K562 (cell line): ENCODE measurements at regions of chr2 and their contacts with region 1.

Region 1: GRCh38 chr2:65722028-65722778 is 289.8 kb upstream of the SPRED2 start:
- DNase-seq: peak in 2 of 4 experiments; percentile 36 to 62
- ATAC-seq: peak; percentile 95
- H3K4me3 ChIP-seq: no peak overlapping the region
- H3K27ac ChIP-seq: no peak overlapping the region
- H3K4me1 ChIP-seq: no peaks in the 10 kb centered on the region
- H3K27me3 ChIP-seq: peaks cover 0 to 2% of the 10 kb centered on the region in 2 experiments; a peak in 3 of 5 replicates
- CTCF ChIP-seq: peak; percentile 52 to 75 (median 64)
- EP300 ChIP-seq: no peak
- POLR2A ChIP-seq: no peak
- RAD21 ChIP-seq: peak; percentile 85 to 93

Region 2: GRCh38 chr2:64904413-64905329 is 817.5 kb before region 1 on chr2:
- CTCF ChIA-PET with region 1: no interaction called
- POLR2A ChIA-PET with region 1: no interaction called
- in situ Hi-C with region 1: no loop called
- intact Hi-C with region 1: no loop called
- DNase-seq: no peak
- ATAC-seq: no peak
- H3K4me3 ChIP-seq: no peak overlapping the region
- H3K27ac ChIP-seq: no peak overlapping the region
- H3K4me1 ChIP-seq: no peaks in the 10 kb centered on the region
- H3K27me3 ChIP-seq: peaks cover 18 to 31% of the 10 kb centered on the region in 2 experiments; a peak in 4 of 5 replicates
- CTCF ChIP-seq: no peak
- EP300 ChIP-seq: no peak
- POLR2A ChIP-seq: no peak
- RAD21 ChIP-seq: no peak

Region 3: DNA sequence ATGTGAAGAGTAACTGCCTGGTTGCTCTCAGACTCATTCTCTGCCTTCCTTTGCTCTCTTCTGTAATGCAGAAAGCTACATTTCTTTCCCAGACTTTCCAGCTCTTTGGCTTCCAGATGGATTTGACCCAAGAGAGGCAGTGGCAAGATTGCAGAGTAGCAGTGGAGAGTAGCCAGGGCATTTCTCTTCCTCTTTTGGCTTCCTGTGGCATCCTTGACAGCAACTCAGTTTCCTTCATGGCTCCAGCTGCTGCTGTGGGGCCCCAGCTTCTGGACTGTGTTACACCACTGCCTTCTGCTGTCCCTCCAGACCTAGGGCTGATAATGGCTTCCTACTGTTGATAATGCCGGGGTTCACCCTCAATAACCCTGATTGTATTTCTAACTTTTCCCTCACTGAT is 179.6 kb after region 1 on chr2:
- CTCF ChIA-PET with region 1: no interaction called
- POLR2A ChIA-PET with region 1: no interaction called
- in situ Hi-C with region 1: no loop called
- intact Hi-C with region 1: loop called (anchors 5 kb)
- DNase-seq: peak in 1 of 4 experiments; percentile 9
- ATAC-seq: peak; percentile 74
- H3K4me3 ChIP-seq: no peak overlapping the region
- H3K27ac ChIP-seq: no peak overlapping the region
- H3K4me1 ChIP-seq: no peaks in the 10 kb centered on the region; a peak in 1 of 5 replicates
- H3K27me3 ChIP-seq: no peaks in the 10 kb centered on the region
- CTCF ChIP-seq: peak; percentile 26 to 50 (median 27); a peak in 3 of 6 replicates
- EP300 ChIP-seq: no peak
- POLR2A ChIP-seq: no peak
- RAD21 ChIP-seq: peak; percentile 57 to 63